ENCODE measurements at regions of chr12 and their contacts with region 1.

Region 1: DNA sequence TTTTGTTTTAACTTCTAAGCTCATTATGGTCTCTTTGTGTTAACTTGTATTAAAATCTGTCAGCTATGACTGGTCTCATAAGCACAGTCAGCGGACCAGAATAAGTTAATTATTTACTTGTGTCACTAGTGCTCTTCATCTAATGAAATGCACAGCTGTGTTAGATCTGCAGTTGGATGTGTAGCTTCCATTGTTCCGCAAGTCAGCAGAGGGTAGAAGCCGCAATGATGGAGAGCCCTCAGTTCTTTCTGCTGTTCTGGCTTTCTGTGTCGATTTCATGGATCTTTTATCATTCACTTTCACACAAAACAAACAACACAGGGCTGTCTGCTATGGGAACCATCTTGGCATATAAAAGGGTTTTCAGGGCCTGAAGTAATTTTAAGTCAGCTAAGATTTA is 89.3 kb upstream of the RFX4 start:
- DNase-seq: peak in 2 of 10 donors; percentile 18 to 32
- H3K4me3 ChIP-seq: peak overlapping the region in 1 of 59 donors; percentile 18
- H3K27ac ChIP-seq: no peak overlapping the region
- H3K27me3 ChIP-seq: no peaks in the 10 kb centered on the region
- CTCF ChIP-seq: peak in 2 of 56 donors; percentile 13 to 34

Region 2: DNA sequence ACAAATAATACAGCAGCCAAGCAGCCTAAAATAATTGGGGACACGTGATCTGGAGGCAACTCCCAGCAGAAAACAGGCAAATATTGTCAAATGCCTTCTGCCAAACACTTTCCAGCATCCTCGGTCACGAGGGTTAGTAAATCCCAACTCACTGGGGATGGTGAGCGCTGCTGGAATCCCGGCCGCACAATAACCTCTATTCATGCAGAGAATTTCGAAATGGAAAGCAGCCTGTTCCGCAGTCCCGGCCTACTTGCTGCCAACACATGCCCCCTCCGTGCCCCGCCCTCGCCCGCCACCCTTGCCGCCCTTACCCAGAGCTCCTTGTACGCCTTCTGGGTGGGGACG is 151.5 kb after region 1 on chr12:
- intact Hi-C with region 1: loop called in 1 of 2 experiments (anchors 10 kb)
- DNase-seq: peak; percentile 23 to 89 (median 84)
- H3K4me3 ChIP-seq: peak overlapping the region in 38 of 59 donors; percentile 1 to 54 (median 26)
- H3K27ac ChIP-seq: peak overlapping the region in 58 of 59 donors; percentile 3 to 95 (median 83)
- H3K27me3 ChIP-seq: no peaks in the 10 kb centered on the region
- CTCF ChIP-seq: peak in 2 of 56 donors; percentile 7 to 24

Measured in dorsolateral prefrontal cortex (tissue), 120 donors.